ENCODE measurements at regions of chr9 and their contacts with region 1.

Region 1: GRCh38 chr9:2014696-2015580 is at the start of gene SMARCA2:
- DNase-seq: peak; percentile 95 to 98
- ATAC-seq: peak; percentile 78 to 93 (median 84)
- H3K4me3 ChIP-seq: peak within 1 kb of the TSS; percentile 97
- H3K4me3 Mint-ChIP-seq: peak within 1 kb of the TSS; percentile 99
- H3K27ac ChIP-seq: peak within 1 kb of the TSS; percentile 89
- H3K27ac Mint-ChIP-seq: peak within 1 kb of the TSS; percentile 97 to 99
- H3K4me1 ChIP-seq: peaks cover 15% of the 10 kb centered on the region
- H3K4me1 Mint-ChIP-seq: peaks cover 27 to 41% of the 10 kb centered on the region in 2 donors
- H3K27me3 ChIP-seq: no peaks in the 10 kb centered on the region
- H3K27me3 Mint-ChIP-seq: peaks cover 12 to 16% of the 10 kb centered on the region in 2 donors
- CTCF ChIP-seq: no peak
- total RNA-seq, gene SMARCA2: 303 to 324 (median 308) TPM

Region 2: GRCh38 chr9:272251-273213 is 1742.4 kb before region 1 on chr9:
- intact Hi-C with region 1: loop called (anchors 10 kb)
- DNase-seq: peak; percentile 57 to 92
- ATAC-seq: peak; percentile 77 to 95 (median 87)
- H3K4me3 ChIP-seq: peak overlapping the region; percentile 69
- H3K4me3 Mint-ChIP-seq: peak overlapping the region; percentile 90
- H3K27ac ChIP-seq: peak overlapping the region; percentile 92
- H3K27ac Mint-ChIP-seq: no peak overlapping the region
- H3K4me1 ChIP-seq: peaks cover 60% of the 10 kb centered on the region
- H3K4me1 Mint-ChIP-seq: peaks cover 41 to 60% of the 10 kb centered on the region in 2 donors
- H3K27me3 ChIP-seq: no peaks in the 10 kb centered on the region
- H3K27me3 Mint-ChIP-seq: no peaks in the 10 kb centered on the region
- CTCF ChIP-seq: no peak

Region 3: DNA sequence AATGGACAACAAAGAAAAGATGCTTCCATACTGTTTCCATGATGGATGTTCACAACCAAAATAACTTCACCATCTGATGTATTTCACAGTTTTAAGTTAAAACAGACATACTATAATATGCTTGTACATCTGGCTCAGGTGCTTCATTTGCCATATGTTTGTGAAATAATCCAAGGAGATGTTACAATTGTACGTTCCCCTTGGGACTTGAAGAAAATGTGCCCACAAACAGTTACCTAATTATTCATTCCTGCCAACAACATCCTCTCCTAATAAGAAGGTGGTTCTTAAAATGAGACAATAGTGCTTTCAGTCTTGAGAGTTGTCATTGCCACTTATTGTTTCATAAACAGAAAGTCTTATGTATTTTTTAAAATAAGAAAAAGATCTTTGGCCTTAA is 32.9 kb before region 1 on chr9:
- intact Hi-C with region 1: no loop called
- DNase-seq: no peak
- ATAC-seq: no peak
- H3K4me3 ChIP-seq: no peak overlapping the region
- H3K4me3 Mint-ChIP-seq: no peak overlapping the region
- H3K27ac ChIP-seq: no peak overlapping the region
- H3K27ac Mint-ChIP-seq: no peak overlapping the region
- H3K4me1 ChIP-seq: no peaks in the 10 kb centered on the region
- H3K4me1 Mint-ChIP-seq: no peaks in the 10 kb centered on the region
- H3K27me3 ChIP-seq: no peaks in the 10 kb centered on the region
- H3K27me3 Mint-ChIP-seq: peaks cover under 1 to 23% of the 10 kb centered on the region in 2 donors
- CTCF ChIP-seq: no peak

Region 4: GRCh38 chr9:2053883-2054845 is 39.2 kb after region 1 on chr9:
- intact Hi-C with region 1: loop called (anchors 1 kb)
- DNase-seq: peak; percentile 50 to 88
- ATAC-seq: peak; percentile 96 to 98 (median 97)
- H3K4me3 ChIP-seq: no peak overlapping the region
- H3K4me3 Mint-ChIP-seq: peak overlapping the region; percentile 68
- H3K27ac ChIP-seq: peak overlapping the region; percentile 77
- H3K27ac Mint-ChIP-seq: peak overlapping the region; percentile 92 to 93
- H3K4me1 ChIP-seq: peaks cover 8% of the 10 kb centered on the region
- H3K4me1 Mint-ChIP-seq: peaks cover 35 to 50% of the 10 kb centered on the region in 2 donors
- H3K27me3 ChIP-seq: no peaks in the 10 kb centered on the region
- H3K27me3 Mint-ChIP-seq: no peaks in the 10 kb centered on the region
- CTCF ChIP-seq: no peak

Region 5: GRCh38 chr9:2158111-2158610 is 143.2 kb after region 1 on chr9:
- intact Hi-C with region 1: loop called (anchors 10 kb)
- DNase-seq: peak; percentile 26 to 72
- ATAC-seq: peak; percentile 75 to 76 (median 75)
- H3K4me3 ChIP-seq: peak overlapping the region; percentile 30
- H3K4me3 Mint-ChIP-seq: peak overlapping the region; percentile 85
- H3K27ac ChIP-seq: no peak overlapping the region
- H3K27ac Mint-ChIP-seq: peak overlapping the region; percentile 80 to 87
- H3K4me1 ChIP-seq: peaks cover 13% of the 10 kb centered on the region
- H3K4me1 Mint-ChIP-seq: peaks cover 72 to 81% of the 10 kb centered on the region in 2 donors
- H3K27me3 ChIP-seq: no peaks in the 10 kb centered on the region
- H3K27me3 Mint-ChIP-seq: no peaks in the 10 kb centered on the region
- CTCF ChIP-seq: no peak

Region 6: DNA sequence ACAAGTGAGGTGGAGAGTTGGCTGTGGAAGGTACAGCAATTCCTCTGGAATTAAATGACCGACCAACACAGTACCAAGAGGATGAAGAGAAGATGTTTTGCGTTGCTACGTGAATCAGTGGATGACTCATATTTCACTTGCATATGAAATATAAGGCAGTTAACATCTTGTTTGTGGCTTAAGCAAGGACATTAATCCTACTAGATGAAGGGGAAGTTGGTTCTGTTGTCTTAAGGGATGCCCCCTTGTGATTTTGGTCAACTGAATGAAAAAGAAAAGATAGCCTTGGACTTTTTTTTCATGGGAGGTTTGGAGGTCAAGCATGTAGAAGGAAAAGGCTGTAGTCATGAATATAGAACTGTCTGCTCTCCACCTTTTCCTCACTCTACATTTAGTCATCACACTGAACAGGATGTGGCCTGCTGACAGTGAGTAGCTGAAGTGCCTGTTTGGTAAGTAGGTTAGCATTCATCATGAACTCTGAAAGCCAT is 640.5 kb after region 1 on chr9:
- intact Hi-C with region 1: loop called (anchors 1 kb)
- DNase-seq: peak; percentile 44 to 46
- ATAC-seq: peak; percentile 83 to 90 (median 88)
- H3K4me3 ChIP-seq: no peak overlapping the region
- H3K4me3 Mint-ChIP-seq: peak overlapping the region; percentile 54
- H3K27ac ChIP-seq: peak overlapping the region; percentile 86
- H3K27ac Mint-ChIP-seq: peak overlapping the region; percentile 97
- H3K4me1 ChIP-seq: peaks cover 13% of the 10 kb centered on the region
- H3K4me1 Mint-ChIP-seq: peaks cover 34 to 41% of the 10 kb centered on the region in 2 donors
- H3K27me3 ChIP-seq: no peaks in the 10 kb centered on the region
- H3K27me3 Mint-ChIP-seq: no peaks in the 10 kb centered on the region
- CTCF ChIP-seq: no peak

Region 7: GRCh38 chr9:3525836-3526164 is 1510.9 kb after region 1 on chr9 and contains the start of gene RFX3:
- intact Hi-C with region 1: loop called (anchors 5 kb)
- DNase-seq: peak; percentile 88 to 97
- ATAC-seq: peak; percentile 59 to 86 (median 70)
- H3K4me3 ChIP-seq: peak within 1 kb of the TSS; percentile 88
- H3K4me3 Mint-ChIP-seq: peak within 1 kb of the TSS; percentile 92
- H3K27ac ChIP-seq: peak within 1 kb of the TSS; percentile 98
- H3K27ac Mint-ChIP-seq: peak within 1 kb of the TSS; percentile 89 to 94
- H3K4me1 ChIP-seq: peaks cover 16% of the 10 kb centered on the region
- H3K4me1 Mint-ChIP-seq: peaks cover 56 to 58% of the 10 kb centered on the region in 2 donors
- H3K27me3 ChIP-seq: no peaks in the 10 kb centered on the region
- H3K27me3 Mint-ChIP-seq: no peaks in the 10 kb centered on the region
- CTCF ChIP-seq: no peak
- total RNA-seq, gene RFX3: 24.0 to 30.6 (median 30.0) TPM

Measured in natural killer cell (primary cell).